ENCODE measurements at regions of chr6 and their contacts with region 1.

Region 1: DNA sequence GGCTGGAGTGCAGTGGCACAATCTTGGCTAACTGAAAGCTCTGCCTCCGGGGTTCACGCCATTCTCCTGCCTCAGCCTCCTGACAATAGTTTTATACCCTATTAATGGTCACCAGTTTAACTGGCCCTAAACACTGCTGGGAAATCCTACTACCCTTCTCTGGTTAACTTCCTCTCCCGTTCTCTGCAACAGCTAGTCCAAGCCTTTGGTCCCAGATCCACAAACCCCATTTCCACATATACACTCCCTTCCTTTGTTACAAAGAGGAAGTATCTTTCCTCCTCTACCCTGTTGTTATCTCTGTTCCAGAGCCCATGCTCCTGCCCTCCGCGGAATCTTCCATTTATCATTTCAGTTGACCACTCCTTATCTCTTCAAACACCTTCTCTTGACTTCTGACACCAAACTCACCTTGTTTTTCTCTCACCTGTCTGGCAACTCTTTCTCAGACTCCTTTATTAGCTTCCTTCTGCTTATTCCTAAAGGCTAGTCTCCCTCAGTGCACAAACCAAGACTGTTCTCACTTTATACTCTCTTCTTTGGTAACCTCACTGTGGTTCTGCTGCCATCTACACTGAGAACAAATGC is 25.0 kb upstream of the TBC1D22B start:
- DNase-seq: no peak
- ATAC-seq: no peak
- H3K4me3 ChIP-seq: no peak overlapping the region
- H3K4me3 Mint-ChIP-seq: no peak overlapping the region
- H3K27ac ChIP-seq: no peak overlapping the region
- H3K27ac Mint-ChIP-seq: no peak overlapping the region
- H3K4me1 ChIP-seq: no peaks in the 10 kb centered on the region
- H3K4me1 Mint-ChIP-seq: no peaks in the 10 kb centered on the region
- H3K27me3 ChIP-seq: no peaks in the 10 kb centered on the region
- H3K27me3 Mint-ChIP-seq: peaks cover 7% of the 10 kb centered on the region
- CTCF ChIP-seq: no peak

Region 2: DNA sequence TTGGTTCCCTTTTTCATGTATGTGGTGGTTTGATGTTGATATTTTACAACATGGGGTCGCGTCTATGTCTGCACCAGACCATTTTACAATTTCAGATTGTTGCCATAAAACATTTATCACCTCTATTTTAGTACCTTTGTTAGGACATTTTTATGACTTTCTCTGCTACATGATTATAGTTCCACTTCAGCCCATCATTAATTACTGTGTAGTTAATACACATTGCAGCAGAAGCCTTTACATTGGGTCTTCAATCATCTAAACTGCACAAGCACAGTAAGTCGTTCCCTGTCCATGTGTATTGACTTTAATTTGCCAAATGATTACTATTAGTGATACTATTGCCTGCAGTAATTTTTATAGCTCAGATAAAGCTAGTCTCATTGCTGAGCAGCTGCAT is 41.2 kb after region 1 on chr6:
- CTCF ChIA-PET with region 1: no interaction called
- POLR2A ChIA-PET with region 1: no interaction called
- intact Hi-C with region 1: loop called in 1 of 2 experiments (anchors 2 kb)
- DNase-seq: no peak
- ATAC-seq: no peak
- H3K4me3 ChIP-seq: no peak overlapping the region
- H3K4me3 Mint-ChIP-seq: no peak overlapping the region
- H3K27ac ChIP-seq: no peak overlapping the region
- H3K27ac Mint-ChIP-seq: no peak overlapping the region
- H3K4me1 ChIP-seq: peaks cover 9% of the 10 kb centered on the region
- H3K4me1 Mint-ChIP-seq: peaks cover 43% of the 10 kb centered on the region
- H3K27me3 ChIP-seq: no peaks in the 10 kb centered on the region
- H3K27me3 Mint-ChIP-seq: no peaks in the 10 kb centered on the region
- CTCF ChIP-seq: no peak

Measured in CD8-positive, alpha-beta T cell (primary cell).